ACHN (cell line): ENCODE measurements at regions of chr2 and their contacts with region 1.

Region 1: DNA sequence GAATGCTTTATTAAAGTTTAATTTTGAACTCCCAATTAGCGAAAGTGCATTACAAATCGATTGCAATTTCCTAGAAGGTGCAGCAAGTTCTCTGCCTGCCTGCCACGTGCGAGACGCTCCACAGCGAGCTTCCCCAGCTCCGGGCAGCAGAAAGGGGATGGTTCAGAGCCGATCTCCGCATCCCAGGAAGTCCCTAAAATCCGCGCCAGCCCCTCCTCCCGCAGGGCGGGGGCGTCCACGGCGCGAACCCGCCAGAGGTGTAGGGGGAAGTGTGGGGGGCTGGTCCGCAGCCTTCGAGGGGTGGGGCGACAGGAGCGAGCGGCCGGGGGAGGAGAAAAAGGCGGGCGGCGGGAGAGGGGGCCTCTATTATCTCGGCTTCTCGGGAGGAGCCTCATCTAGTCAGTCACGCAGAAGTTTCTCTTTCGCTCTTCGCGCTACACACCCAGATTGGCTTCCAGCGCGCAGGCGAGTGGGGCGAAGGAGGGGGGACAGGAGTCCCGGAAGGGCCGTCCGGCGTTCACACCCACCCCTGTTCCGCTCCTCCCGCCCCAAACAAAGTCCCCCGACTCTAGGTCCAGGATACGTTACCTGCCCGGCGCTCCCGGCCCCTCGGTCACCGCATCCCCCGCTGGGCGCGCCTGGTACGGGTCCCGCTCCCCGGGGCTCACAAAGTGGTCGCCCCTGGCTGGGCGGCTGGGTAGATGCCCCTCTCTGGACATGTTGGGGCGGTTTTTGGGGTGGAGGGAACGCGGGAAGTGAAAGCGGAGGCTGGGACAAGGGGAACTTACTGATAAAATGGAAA is 9.1 kb upstream of the NR4A2 start:
- DNase-seq: peak; percentile 98

Region 2: DNA sequence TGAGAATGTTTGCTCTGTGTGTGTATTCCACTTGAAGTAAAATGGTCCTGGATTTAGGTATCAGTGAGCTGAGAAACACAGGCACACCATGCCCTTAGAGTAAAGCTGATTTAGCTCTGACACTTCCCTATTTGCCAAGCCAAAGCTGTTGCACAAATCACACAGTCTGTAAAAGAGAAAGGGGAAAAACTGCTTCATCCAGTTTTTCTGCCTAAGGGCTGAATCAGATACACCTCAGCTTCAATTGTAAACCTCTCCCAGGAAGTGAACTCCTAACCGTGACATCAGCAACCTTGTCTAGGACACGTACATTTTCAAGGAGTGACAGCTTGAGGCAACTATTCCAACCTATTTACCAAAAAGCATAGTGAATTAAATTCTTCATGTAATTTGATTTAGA is 159.5 kb before region 1 on chr2:
- in situ Hi-C with region 1: no loop called
- DNase-seq: no peak

Region 3: GRCh38 chr2:156589381-156590079 is 247.9 kb after region 1 on chr2:
- in situ Hi-C with region 1: loop called (anchors 25 kb)
- DNase-seq: peak; percentile 61